GM10248 (cell line): ENCODE measurements at regions of chr5 and their contacts with region 1.

Region 1: GRCh38 chr5:93612855-93613243 is 29.8 kb downstream of the NR2F1 start:
- DNase-seq: no peak
- CTCF ChIP-seq: no peak

Region 2: DNA sequence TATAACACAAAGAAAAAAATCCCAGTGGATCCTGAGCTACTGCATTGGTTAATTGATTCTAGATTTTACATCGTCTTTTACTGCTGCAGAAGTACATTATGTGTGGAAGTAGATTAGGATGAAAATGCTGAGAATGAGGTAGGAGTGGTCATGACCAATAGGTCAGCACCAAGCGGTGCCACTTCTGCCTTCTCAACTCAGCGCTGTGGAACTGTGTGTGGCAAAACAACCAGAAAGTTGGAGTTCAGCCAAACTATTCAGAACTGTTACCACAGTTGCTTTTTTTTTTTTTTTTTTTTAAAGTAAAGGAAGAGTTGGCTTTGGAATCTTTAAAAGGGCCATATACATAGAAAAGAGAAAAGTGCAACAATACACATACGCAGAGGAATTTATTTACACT is 104.3 kb after region 1 on chr5:
- CTCF ChIA-PET with region 1: no interaction called
- POLR2A ChIA-PET with region 1: no interaction called
- DNase-seq: no peak
- CTCF ChIP-seq: no peak

Region 3: GRCh38 chr5:94745786-94746730 is 1133.2 kb after region 1 on chr5:
- CTCF ChIA-PET with region 1: no interaction called
- POLR2A ChIA-PET with region 1: interaction called, 10 read pairs
- DNase-seq: peak; percentile 64
- CTCF ChIP-seq: no peak